Dorsolateral prefrontal cortex (tissue), 120 donors: ENCODE measurements at regions of chr7 and their contacts with region 1.

Region 1: DNA sequence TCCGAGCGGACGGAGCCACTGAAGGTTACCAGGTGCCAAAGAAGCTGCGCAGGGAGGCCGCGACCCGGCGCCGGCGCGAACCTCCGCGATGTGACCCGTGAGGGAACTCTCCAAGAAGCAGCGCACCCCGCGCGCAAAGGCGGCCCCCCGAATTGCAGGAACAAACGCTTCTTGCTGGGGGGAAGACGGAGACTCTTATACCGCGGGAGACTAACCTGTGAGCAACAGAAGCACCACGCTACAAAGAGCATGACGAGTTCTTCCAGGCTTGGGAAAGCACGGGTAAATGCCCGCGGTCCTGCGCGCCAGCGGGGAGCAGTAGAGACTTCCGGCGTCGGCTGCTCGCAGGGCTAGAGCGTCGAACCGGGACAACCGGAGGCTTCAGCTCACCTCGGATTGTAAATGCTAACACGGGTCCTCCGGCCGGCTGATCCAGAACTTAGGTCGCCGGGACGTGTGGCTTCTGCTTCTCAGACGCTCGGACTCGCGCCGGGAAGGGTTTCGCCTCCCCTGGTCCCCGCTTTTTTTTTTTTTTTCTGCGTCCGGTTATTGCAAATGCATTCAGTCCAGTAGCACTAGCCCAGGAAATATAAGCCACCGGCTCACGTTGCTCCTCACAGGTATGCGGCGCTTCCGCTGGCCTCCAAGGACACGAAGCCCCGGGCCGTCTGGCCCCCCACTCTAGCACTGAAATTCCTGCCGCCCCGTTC is at the start of gene COA1:
- DNase-seq: peak; percentile 77 to 92 (median 88)
- H3K4me3 ChIP-seq: peak within 1 kb of the TSS; percentile 64 to 99 (median 87)
- H3K27ac ChIP-seq: peak within 1 kb of the TSS in 53 of 59 donors; percentile 25 to 90 (median 74)
- H3K27me3 ChIP-seq: no peaks in the 10 kb centered on the region
- CTCF ChIP-seq: peak in 45 of 56 donors; percentile 12 to 63 (median 34)
- total RNA-seq, gene COA1: 52.0 to 94.0 (median 71.9) TPM

Region 2: GRCh38 chr7:43693687-43694398 is 35.5 kb before region 1 on chr7:
- intact Hi-C with region 1: no loop called
- DNase-seq: no peak
- H3K4me3 ChIP-seq: no peak overlapping the region
- H3K27ac ChIP-seq: no peak overlapping the region
- H3K27me3 ChIP-seq: no peaks in the 10 kb centered on the region
- CTCF ChIP-seq: no peak

Region 3: DNA sequence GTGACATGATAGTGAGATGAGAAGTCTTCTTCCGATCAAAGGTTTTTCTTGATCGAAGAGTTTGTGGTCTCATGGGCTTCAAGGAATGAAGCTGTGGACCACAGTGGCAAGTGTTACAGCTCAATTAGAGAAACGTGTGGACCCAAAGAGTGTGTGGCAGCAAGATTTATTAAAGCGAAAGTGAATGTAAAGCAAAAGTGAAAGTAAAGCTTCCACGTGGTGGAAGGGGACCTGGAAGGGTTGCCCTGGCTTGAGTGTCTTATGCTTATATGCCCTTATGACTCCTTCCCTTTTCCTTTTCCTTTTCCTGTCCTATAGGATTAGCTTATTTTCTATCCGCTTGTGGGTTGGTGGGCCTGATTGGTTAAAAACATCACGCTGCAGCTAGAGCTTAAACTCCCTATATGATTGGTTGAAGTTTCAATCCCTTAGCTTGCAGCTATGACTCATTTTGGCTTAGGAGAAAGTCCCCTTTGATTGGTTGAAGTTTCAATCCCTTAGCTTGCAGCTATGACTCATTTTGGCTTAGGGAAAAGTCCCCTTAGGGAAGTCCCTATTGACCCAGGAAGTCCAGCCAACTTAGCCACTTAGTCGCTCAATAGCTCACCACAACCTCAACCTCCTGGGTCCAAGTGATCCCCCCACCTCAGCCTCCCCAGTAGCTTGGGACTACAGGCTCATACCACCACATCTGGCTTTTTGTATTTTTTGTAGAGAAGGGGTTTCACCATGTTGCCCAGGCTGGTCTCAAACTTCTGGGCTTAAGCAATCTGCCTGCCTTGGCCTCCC is 105.3 kb after region 1 on chr7:
- intact Hi-C with region 1: loop called (anchors 5 kb)
- DNase-seq: no peak
- H3K4me3 ChIP-seq: peak overlapping the region in 27 of 59 donors; percentile 2 to 46 (median 24)
- H3K27ac ChIP-seq: no peak overlapping the region
- H3K27me3 ChIP-seq: no peaks in the 10 kb centered on the region
- CTCF ChIP-seq: no peak

Region 4: DNA sequence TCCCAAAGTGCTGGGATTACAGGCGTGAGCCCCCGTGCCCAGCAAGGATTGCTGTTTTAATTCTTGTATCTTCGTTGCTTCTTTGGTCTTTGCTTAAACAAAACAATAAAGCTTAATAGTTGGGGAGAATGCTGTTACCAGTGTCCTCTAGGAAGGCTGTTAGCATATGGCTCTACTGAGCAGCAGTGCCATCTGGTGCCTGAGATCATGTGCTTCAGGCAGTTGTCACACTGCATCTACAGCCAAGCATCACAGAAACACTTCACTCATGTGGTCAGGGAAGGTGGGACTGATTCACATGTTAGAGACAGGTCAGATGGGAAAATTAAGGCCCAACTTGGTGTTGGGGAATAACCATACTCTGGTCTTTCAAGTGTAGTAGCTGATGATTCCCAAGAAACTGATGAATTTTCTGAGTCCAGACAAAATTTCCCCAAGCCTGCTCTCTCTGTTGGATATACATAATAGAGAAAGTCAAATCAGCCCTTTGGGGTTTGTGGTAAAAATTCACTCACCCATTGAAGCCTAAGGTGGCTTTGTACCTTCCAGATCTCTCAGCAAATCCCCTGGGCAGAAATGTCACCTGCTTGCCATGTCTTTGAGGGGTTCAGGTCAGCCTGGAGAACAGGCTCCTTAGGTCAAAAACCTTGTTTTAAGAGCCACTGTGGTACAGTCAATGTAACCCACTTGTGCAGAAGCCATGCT is 225.3 kb after region 1 on chr7:
- intact Hi-C with region 1: loop called in 1 of 2 experiments (anchors 10 kb)
- DNase-seq: peak; percentile 44 to 86 (median 76)
- H3K4me3 ChIP-seq: no peak overlapping the region
- H3K27ac ChIP-seq: peak overlapping the region in 49 of 59 donors; percentile 9 to 87 (median 53)
- H3K27me3 ChIP-seq: no peaks in the 10 kb centered on the region
- CTCF ChIP-seq: peak in 52 of 56 donors; percentile 20 to 64 (median 48)